GM12878 (cell line): ENCODE measurements at regions of chr11 and their contacts with region 1.

Region 1: GRCh38 chr11:8566613-8567210 is 27.3 kb downstream of the STK33 start:
- DNase-seq: peak; percentile 32
- ATAC-seq: peak; percentile 78
- H3K4me3 ChIP-seq: no peak overlapping the region
- H3K27ac ChIP-seq: no peak overlapping the region
- H3K4me1 ChIP-seq: peaks cover 5% of the 10 kb centered on the region; the same call in 1 of the 2 replicates
- H3K27me3 ChIP-seq: no peaks in the 10 kb centered on the region
- CTCF ChIP-seq: peak; percentile 40 to 63 (median 45); a peak in 4 of 6 replicates
- EP300 ChIP-seq: no peak
- POLR2A ChIP-seq: no peak
- RAD21 ChIP-seq: peak; percentile 82

Region 2: DNA sequence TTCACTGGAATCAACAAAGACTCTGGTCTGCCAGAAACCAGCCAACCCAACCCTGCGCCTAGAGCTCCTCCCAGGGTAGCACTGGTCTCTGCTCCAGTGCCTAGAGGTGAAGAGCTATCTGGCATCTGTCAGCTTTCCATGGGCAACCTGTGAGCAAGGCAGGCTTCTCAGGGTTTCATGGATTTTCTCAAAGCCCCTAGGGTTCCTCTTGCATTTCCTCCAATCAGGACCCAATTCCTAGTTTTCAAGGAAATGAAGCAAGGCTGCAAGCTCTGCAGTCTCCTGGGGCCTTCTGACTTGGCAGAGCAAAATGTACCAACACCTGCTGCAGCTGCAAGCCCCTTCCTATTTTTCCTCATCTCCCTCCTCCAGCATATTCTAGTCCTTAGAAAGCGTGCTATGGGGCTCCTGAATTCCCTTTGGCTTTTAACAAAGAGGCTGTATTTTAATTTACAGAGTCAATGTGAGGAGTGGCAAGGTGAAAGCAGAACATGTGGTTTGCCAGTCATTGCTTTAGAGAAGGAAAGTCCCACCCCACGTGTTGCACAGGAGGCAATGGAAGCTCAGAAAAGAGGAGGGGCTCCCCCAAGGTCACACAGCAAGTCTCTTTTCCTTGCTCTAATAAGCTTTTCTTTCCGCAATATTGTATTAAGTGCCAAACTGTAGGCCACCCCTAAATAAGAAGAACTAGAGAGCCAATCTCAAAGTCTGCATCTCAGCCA is 364.9 kb before region 1 on chr11:
- CTCF ChIA-PET with region 1: interaction called, 53 read pairs
- POLR2A ChIA-PET with region 1: interaction called, 3 read pairs
- RAD21 ChIA-PET with region 1: interaction called, 10 read pairs
- SMC1A ChIA-PET with region 1: interaction called, 17 read pairs
- in situ Hi-C with region 1: no loop called
- intact Hi-C with region 1: no loop called
- DNase-seq: peak; percentile 42
- ATAC-seq: peak; percentile 98
- H3K4me3 ChIP-seq: no peak overlapping the region
- H3K27ac ChIP-seq: peak overlapping the region; percentile 13
- H3K4me1 ChIP-seq: peaks cover 4% of the 10 kb centered on the region; the same call in 1 of the 2 replicates
- H3K27me3 ChIP-seq: peaks cover 0 to 3% of the 10 kb centered on the region in 2 experiments; a peak in 1 of 4 replicates
- CTCF ChIP-seq: no peak
- EP300 ChIP-seq: peak in 1 of 2 experiments; percentile 35; a peak in 1 of 4 replicates
- POLR2A ChIP-seq: no peak
- RAD21 ChIP-seq: no peak

Region 3: DNA sequence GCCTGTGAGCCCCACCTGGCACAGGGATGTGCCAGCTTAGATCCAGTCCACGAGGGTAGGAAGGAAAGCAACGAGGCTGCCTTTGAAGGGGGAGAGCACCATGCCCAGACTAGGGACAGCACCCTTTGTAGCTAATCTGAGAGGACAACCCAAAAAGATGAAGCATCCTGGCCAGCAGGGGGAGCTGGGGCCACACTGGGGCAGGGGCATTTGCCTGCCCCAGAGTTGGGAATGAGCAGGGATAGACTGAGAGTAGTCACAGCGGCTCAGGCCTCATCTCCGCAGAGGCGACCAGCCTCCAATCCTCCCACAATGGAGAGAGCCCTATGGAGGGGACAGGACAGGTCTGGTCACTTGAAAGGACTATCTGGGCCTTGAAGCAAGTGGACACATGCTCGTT is 319.4 kb before region 1 on chr11:
- CTCF ChIA-PET with region 1: interaction called, 53 read pairs
- POLR2A ChIA-PET with region 1: no interaction called
- RAD21 ChIA-PET with region 1: interaction called, 14 read pairs
- SMC1A ChIA-PET with region 1: interaction called, 14 read pairs
- in situ Hi-C with region 1: no loop called
- intact Hi-C with region 1: loop called (anchors 1 kb)
- DNase-seq: no peak
- ATAC-seq: peak; percentile 88
- H3K4me3 ChIP-seq: no peak overlapping the region
- H3K27ac ChIP-seq: no peak overlapping the region
- H3K4me1 ChIP-seq: no peaks in the 10 kb centered on the region
- H3K27me3 ChIP-seq: peaks cover 1 to 2% of the 10 kb centered on the region in 2 experiments; a peak in 2 of 4 replicates
- CTCF ChIP-seq: peak; percentile 36 to 57 (median 55); a peak in 5 of 6 replicates
- EP300 ChIP-seq: no peak
- POLR2A ChIP-seq: no peak
- RAD21 ChIP-seq: peak; percentile 38; the same call in 1 of the 2 replicates

Region 4: DNA sequence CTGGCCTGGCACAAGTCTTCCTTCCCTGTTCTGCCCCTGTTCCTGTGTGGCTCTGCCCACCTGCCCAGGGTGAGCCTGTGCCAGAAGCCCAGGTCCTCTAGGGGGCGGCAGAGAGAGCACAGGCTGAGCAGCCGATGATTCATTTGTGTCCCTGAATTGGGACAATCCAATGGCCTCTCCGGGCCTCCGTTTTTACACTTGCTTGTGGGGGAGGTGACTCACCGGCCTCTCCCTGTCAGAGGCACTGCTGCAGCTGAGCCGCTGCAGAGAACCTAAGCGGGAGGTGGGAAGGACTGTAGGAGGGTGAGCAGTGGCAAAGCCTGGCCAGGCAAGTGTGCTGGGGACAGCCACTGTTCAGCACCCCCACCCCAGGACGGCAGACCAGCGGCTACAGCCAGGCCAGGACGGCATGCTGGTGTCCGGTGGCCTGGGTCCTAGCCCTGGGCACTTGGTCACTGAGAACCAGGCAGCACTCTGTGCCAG is 237.8 kb before region 1 on chr11:
- CTCF ChIA-PET with region 1: interaction called, 53 read pairs
- POLR2A ChIA-PET with region 1: interaction called, 3 read pairs
- RAD21 ChIA-PET with region 1: interaction called, 16 read pairs
- SMC1A ChIA-PET with region 1: interaction called, 10 read pairs
- in situ Hi-C with region 1: no loop called
- intact Hi-C with region 1: loop called (anchors 2 kb)
- DNase-seq: peak; percentile 53
- ATAC-seq: peak; percentile 87
- H3K4me3 ChIP-seq: no peak overlapping the region
- H3K27ac ChIP-seq: no peak overlapping the region
- H3K4me1 ChIP-seq: peaks cover 28% of the 10 kb centered on the region
- H3K27me3 ChIP-seq: no peaks in the 10 kb centered on the region
- CTCF ChIP-seq: peak; percentile 85 to 90 (median 88)
- EP300 ChIP-seq: no peak
- POLR2A ChIP-seq: no peak
- RAD21 ChIP-seq: peak; percentile 50

Region 5: DNA sequence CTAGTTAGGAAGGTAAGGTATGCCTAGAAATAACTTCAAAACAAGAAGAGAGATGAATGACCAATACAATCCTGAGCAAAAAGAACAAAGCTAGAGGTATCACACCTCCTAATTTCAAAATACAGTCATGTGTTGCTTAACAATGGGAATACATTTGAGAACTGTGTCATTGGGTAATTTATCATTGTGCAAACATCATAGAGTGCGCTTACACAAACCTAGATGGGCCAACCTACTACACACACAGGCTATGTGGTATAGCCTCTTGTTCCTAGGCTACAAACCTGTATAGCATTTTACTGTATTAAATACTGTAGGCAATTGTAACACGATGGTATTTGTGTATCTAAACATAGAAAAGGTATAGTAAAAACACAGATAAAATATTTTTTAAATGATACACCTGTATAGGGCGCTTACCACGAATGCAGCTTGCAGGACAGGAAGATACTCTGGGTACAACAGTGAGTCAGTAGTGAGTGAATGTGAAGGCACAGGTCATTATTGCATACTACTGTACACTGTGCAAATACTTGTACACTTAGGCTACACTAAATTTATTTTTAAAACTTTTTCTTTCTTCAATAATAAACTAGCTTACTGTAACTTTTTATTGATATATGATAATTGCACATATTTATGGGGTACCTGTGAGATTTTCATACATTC is 20.9 kb before region 1 on chr11:
- CTCF ChIA-PET with region 1: interaction called, 19 read pairs
- POLR2A ChIA-PET with region 1: no interaction called
- RAD21 ChIA-PET with region 1: interaction called, 5 read pairs
- SMC1A ChIA-PET with region 1: interaction called, 25 read pairs
- in situ Hi-C with region 1: no loop called
- intact Hi-C with region 1: no loop called
- DNase-seq: no peak
- ATAC-seq: no peak
- H3K4me3 ChIP-seq: no peak overlapping the region
- H3K27ac ChIP-seq: no peak overlapping the region
- H3K4me1 ChIP-seq: no peaks in the 10 kb centered on the region
- H3K27me3 ChIP-seq: no peaks in the 10 kb centered on the region
- CTCF ChIP-seq: no peak
- EP300 ChIP-seq: no peak
- POLR2A ChIP-seq: no peak
- RAD21 ChIP-seq: no peak

Region 6: DNA sequence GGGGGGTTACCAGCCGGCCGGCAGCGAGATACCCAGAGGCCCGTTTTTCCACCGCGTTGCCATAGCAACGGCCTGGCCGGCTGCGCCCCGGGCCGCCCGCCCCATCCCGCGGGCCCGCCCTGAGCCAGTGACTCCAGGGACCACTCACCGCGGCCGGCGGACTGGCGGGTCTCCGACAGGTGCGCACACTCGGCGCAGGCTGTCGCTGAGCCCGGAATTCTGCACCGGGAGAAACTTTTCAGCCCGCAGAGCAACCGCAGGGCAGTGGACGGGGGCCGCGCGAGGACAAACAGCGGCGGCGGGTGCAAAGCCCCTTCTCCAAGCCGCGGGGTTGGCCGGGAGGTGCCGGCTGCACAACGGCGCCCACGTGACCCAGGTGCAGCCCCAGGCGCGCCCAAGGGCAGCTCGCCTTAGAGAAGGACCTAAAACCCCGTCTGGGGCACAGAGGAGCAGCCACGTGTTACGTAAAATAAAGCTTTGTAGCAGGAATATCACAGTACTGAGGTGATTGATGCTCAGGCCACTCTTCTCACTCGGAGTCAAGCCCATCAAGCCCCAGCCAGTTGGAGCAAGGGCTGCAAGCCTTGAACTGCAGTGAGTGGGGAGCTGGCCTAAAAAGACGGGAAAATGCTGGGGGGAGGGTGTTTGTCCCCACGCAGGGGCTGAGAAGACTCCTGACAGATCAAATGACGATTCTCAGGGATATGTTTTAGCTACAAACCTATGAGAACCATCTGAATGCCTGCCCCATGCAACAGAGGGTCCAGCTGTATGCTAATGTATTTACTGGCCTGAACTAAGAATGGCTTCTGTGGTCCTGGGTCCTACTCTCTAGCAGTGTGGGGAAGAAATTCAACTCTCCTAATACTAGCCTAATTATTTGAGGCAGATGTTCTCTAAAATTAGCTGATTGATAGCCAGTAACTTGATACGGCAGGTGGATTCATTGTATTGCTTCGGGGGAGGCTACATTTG is 27.5 kb after region 1 on chr11 and contains the start of gene STK33:
- CTCF ChIA-PET with region 1: interaction called, 20 read pairs
- POLR2A ChIA-PET with region 1: interaction called, 3 read pairs
- RAD21 ChIA-PET with region 1: interaction called, 17 read pairs
- SMC1A ChIA-PET with region 1: interaction called, 17 read pairs
- in situ Hi-C with region 1: no loop called
- intact Hi-C with region 1: no loop called
- DNase-seq: no peak
- ATAC-seq: peak; percentile 98
- H3K4me3 ChIP-seq: peak within 1 kb of the TSS; percentile 92
- H3K27ac ChIP-seq: peak within 1 kb of the TSS; percentile 84
- H3K4me1 ChIP-seq: peaks cover 3% of the 10 kb centered on the region; the same call in 1 of the 2 replicates
- H3K27me3 ChIP-seq: no peaks in the 10 kb centered on the region
- CTCF ChIP-seq: no peak
- EP300 ChIP-seq: no peak
- POLR2A ChIP-seq: peak; percentile 68
- RAD21 ChIP-seq: no peak
- polyA plus RNA-seq, gene STK33: 5.2 to 8.3 TPM

Region 7: DNA sequence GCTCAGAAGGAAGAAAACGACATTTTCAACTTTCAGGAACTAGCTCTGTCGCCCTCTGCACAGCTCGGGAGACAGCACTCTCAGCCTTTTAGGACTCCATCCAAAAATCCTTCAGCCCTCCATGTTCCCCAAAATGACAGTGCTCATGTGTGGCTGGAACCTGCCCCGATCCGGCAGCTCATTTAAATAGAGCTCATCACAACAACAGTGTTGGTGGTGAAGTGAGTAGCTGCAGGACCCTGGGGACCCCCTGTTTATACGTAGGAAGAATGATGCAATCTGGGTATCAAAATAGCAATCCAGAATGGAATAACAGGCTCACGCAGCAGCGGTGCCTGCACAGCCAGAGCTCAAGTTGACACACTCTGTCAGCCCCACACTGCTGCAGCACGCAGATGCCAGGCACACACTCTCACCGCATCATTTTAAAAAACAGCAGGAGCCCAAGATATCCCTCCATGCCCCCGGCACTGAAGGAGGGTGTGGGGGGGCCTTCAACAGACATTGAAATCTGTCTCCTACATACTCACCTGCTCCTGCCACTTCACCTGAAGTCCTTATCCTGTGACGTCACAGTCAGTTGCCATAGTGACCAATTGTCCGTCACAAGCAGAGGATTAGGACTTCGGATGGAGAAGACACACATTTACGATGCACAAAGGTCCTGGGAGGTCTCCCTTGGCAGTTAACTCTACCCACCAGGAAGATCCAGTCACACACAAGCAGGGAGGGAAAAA is 91.8 kb after region 1 on chr11:
- CTCF ChIA-PET with region 1: no interaction called
- POLR2A ChIA-PET with region 1: no interaction called
- RAD21 ChIA-PET with region 1: no interaction called
- SMC1A ChIA-PET with region 1: no interaction called
- in situ Hi-C with region 1: no loop called
- intact Hi-C with region 1: no loop called
- DNase-seq: no peak
- ATAC-seq: no peak
- H3K4me3 ChIP-seq: no peak overlapping the region
- H3K27ac ChIP-seq: no peak overlapping the region
- H3K4me1 ChIP-seq: no peaks in the 10 kb centered on the region
- H3K27me3 ChIP-seq: no peaks in the 10 kb centered on the region
- CTCF ChIP-seq: no peak
- EP300 ChIP-seq: no peak
- POLR2A ChIP-seq: no peak
- RAD21 ChIP-seq: no peak

Region 8: GRCh38 chr11:8709002-8709672 is 142.4 kb after region 1 on chr11:
- CTCF ChIA-PET with region 1: no interaction called
- POLR2A ChIA-PET with region 1: no interaction called
- RAD21 ChIA-PET with region 1: no interaction called
- SMC1A ChIA-PET with region 1: no interaction called
- in situ Hi-C with region 1: no loop called
- intact Hi-C with region 1: no loop called
- DNase-seq: no peak
- ATAC-seq: peak; percentile 26
- H3K4me3 ChIP-seq: no peak overlapping the region
- H3K27ac ChIP-seq: no peak overlapping the region
- H3K4me1 ChIP-seq: no peaks in the 10 kb centered on the region
- H3K27me3 ChIP-seq: no peaks in the 10 kb centered on the region
- CTCF ChIP-seq: no peak
- EP300 ChIP-seq: no peak
- POLR2A ChIP-seq: no peak
- RAD21 ChIP-seq: no peak